Left cardiac atrium (tissue), 4 donors: ENCODE measurements at regions of chr1 and their contacts with region 1.

Region 1: DNA sequence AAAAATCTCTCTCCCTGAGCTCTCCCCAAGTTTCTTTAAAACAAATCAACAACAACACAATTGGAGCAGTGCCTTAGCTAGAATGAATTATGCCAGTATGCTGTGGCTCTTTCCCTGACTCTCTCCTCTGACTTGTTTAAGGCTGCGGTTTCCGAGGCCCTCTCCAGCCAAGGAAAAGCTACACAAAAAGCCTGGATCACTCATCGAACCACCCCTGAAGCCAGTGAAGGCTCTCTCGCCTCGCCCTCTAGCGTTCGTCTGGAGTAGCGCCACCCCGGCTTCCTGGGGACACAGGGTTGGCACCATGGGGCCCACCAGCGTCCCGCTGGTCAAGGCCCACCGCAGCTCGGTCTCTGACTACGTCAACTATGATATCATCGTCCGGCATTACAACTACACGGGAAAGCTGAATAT is 1.9 kb downstream of the S1PR1 start:
- DNase-seq: peak; percentile 92
- ATAC-seq: peak; percentile 67 to 70

Region 2: DNA sequence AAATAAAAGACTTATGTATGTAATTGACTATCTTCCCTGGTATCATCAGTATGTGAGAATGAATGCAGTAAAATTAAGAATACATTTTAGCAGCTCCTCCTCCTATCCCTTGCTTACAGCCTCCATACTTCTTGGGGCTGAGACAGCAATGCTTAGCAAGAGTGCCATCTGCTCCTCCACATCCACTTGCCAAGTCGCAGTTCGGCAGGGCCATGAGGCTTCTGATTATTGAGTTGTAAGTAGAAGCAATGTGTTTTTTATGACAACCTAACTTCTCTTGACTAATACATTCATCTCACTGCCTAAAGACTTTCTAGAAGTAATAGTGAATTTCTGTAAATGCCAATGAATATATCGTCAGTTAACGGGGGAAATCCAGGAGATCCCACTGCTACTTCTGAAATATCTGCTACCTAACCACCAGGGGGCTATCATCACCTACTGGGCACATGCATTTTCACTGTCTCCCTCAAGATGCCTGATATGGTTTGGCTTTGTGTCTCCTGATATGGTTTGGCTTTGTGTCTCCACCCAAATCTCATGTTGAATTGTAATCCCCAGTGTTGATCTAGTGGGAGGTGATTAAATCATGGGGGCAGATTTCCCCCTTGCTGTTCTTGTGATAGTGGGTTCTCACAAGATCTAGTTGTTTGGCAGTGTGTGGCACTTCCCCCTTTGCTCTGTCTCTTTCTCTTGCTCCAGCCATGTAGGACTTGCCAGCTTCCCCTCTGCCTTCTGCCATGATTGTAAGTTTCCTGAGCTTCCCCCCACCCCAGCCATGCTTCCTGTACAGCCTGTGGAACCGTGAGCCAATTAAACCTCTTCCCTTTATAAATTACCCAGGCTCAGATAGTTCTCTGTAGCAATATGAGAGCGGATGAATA is 403.7 kb before region 1 on chr1:
- intact Hi-C with region 1: no loop called
- DNase-seq: no peak
- ATAC-seq: no peak

Region 3: DNA sequence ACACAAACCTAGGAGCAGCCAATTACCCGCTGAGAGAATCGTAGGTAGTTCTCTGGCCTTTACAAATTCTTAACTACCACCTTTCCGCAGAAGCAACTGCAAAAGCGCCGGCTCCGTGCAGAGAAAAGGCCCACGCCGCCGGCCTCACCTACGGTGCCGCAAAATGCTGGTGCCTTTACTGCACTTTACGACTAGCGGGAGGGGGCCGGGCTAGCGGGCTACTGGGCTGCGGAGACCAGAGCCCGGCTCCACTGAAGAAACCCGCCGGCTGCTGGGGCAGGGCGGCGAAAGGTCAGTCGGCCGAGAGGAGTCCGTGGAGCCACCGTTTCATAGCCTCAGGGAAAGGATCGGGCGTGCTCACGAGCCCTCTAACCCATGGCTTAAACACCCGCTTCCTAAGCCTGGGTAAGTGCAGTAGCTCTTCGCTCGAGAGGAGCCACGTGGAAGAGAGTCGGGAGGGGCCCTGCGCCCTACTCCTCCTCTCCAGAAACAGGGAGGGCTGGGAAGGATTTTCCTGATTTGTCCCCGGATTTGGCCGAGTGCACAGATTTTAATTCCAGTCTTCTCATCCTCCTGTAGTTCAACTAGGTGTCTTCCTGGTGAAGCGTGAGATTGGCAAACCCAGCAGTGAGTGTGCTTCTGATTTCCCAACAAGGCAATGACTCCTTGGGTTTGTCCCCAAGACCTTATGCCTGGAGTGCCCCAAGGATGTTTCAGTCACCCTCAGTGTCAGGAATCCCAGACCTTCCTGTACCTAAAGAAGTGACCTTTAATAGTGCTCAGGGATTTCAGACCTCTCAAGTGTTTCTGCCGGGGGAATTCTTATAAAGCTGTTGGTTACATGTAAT is 212.8 kb before region 1 on chr1 and contains the start of gene DPH5:
- intact Hi-C with region 1: loop called in 1 of 2 experiments (anchors 5 kb)
- DNase-seq: peak; percentile 94
- ATAC-seq: peak; percentile 97 to 99
- total RNA-seq, gene DPH5: 28.6 to 28.7 TPM

Region 4: GRCh38 chr1:101136739-101137138 is 101.9 kb before region 1 on chr1:
- intact Hi-C with region 1: loop called in 1 of 2 experiments (anchors 2 kb)
- DNase-seq: no peak
- ATAC-seq: peak; percentile 60 to 65

Region 5: GRCh38 chr1:101181930-101182329 is 56.8 kb before region 1 on chr1:
- intact Hi-C with region 1: loop called in 1 of 2 experiments (anchors 10 kb)
- DNase-seq: peak; percentile 34
- ATAC-seq: peak in 1 of 2 donors; percentile 57

Region 6: DNA sequence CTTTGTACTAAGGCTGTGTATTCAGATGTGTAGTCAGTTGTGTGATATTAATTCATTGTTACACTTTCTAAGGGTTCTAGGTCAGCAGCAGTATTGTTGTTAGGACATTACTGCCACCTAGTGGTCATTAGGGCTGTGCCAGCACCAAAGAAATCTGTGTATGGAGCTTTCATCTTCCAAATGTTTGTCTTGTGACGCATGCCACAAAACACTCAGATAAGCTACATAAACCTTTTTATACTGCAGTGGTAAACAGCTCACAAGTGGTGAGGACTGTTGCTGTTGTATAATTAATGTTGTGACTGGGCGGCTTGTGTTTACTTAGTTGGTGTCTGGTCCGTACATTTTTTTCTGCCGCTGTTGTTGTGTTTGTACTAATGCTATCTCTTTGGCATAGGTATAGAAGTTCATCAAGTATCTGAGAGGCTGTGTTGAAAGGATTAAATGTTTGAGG is 49.8 kb after region 1 on chr1:
- intact Hi-C with region 1: loop called in 1 of 2 experiments (anchors 5 kb)
- DNase-seq: peak; percentile 66
- ATAC-seq: peak; percentile 92 to 93